ENCODE measurements at regions of chr1 and their contacts with region 1.

Region 1: GRCh38 chr1:240018617-240019016 is 73.1 kb upstream of the FMN2 start:
- DNase-seq: no peak
- H3K4me3 ChIP-seq: no peak overlapping the region
- H3K27ac ChIP-seq: no peak overlapping the region
- H3K4me1 ChIP-seq: no peaks in the 10 kb centered on the region
- H3K27me3 ChIP-seq: no peaks in the 10 kb centered on the region
- CTCF ChIP-seq: no peak
- POLR2A ChIP-seq: no peak

Region 2: GRCh38 chr1:240278082-240278481 is 259.5 kb after region 1 on chr1:
- intact Hi-C with region 1: loop called (anchors 5 kb)
- DNase-seq: no peak
- H3K4me3 ChIP-seq: no peak overlapping the region
- H3K27ac ChIP-seq: no peak overlapping the region
- H3K4me1 ChIP-seq: no peaks in the 10 kb centered on the region
- H3K27me3 ChIP-seq: no peaks in the 10 kb centered on the region
- CTCF ChIP-seq: no peak
- POLR2A ChIP-seq: no peak